ENCODE measurements at regions of chr22 and their contacts with region 1.

Region 1: DNA sequence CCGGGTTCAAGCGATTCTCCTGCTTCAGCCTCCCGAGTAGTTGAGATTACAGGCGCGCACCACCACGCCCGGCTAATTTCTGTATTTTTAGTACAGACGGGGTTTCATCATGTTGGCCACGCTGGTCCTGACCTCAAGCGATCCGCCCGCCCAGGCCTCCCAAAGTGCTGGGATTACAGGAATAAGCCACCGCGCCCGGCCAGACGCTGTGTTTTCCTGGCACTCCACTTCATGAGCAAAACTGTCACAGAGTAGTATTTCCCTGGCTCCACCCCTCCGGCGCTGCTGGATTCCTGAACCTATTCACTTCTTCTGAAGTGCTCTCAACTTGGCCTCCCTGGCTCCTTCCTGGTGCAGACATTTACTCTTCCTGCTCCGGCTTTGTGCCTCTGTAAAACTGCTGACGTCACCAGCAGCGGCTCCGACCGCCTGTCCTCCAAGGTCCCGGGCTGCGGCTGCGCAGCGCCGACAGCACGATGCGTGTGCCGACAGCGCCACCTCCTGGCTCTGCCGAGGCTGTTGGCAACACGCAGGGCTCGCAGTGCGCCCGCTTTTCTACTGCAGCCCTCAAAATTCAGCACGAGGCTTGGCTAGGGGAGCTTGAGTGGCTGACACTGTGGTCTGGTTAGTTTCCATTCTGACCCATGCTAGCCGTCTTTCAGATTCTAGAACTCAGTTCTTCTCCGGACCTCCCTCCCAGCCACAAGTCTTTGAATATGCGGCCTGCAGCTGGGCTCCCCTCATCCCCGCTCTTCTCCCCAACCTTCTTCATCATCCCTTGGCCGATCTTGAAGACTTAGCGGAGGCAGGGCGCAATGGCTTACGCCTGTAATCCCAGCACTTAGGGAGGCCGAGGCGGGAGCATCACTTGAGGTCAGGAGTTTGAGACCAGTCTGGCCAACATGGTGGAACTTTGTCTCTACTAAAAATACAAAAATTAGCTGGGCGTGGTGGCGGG is 36.6 kb downstream of the APOL3 start:
- DNase-seq: peak; percentile 80 to 97 (median 94)
- ATAC-seq: peak; percentile 99
- H3K4me3 ChIP-seq: peak overlapping the region; percentile 49 to 54
- H3K4me3 Mint-ChIP-seq: peak overlapping the region; percentile 89
- H3K27ac ChIP-seq: peak overlapping the region; percentile 41 to 71
- H3K27ac Mint-ChIP-seq: peak overlapping the region; percentile 98
- H3K4me1 ChIP-seq: peaks cover 9% of the 10 kb centered on the region
- H3K4me1 Mint-ChIP-seq: peaks cover 13% of the 10 kb centered on the region
- H3K27me3 ChIP-seq: no peaks in the 10 kb centered on the region
- H3K27me3 Mint-ChIP-seq: no peaks in the 10 kb centered on the region
- CTCF ChIP-seq: peak; percentile 95

Region 2: GRCh38 chr22:35430897-35431322 is 693.0 kb before region 1 on chr22:
- CTCF ChIA-PET with region 1: interaction called, 4 read pairs
- POLR2A ChIA-PET with region 1: no interaction called
- intact Hi-C with region 1: loop called (anchors 1 to 5 kb)
- DNase-seq: peak; percentile 49 to 76 (median 66)
- ATAC-seq: peak; percentile 84
- H3K4me3 ChIP-seq: no peak overlapping the region
- H3K4me3 Mint-ChIP-seq: no peak overlapping the region
- H3K27ac ChIP-seq: no peak overlapping the region
- H3K27ac Mint-ChIP-seq: no peak overlapping the region
- H3K4me1 ChIP-seq: no peaks in the 10 kb centered on the region
- H3K4me1 Mint-ChIP-seq: peaks cover 2% of the 10 kb centered on the region
- H3K27me3 ChIP-seq: no peaks in the 10 kb centered on the region
- H3K27me3 Mint-ChIP-seq: no peaks in the 10 kb centered on the region
- CTCF ChIP-seq: peak; percentile 83

Region 3: DNA sequence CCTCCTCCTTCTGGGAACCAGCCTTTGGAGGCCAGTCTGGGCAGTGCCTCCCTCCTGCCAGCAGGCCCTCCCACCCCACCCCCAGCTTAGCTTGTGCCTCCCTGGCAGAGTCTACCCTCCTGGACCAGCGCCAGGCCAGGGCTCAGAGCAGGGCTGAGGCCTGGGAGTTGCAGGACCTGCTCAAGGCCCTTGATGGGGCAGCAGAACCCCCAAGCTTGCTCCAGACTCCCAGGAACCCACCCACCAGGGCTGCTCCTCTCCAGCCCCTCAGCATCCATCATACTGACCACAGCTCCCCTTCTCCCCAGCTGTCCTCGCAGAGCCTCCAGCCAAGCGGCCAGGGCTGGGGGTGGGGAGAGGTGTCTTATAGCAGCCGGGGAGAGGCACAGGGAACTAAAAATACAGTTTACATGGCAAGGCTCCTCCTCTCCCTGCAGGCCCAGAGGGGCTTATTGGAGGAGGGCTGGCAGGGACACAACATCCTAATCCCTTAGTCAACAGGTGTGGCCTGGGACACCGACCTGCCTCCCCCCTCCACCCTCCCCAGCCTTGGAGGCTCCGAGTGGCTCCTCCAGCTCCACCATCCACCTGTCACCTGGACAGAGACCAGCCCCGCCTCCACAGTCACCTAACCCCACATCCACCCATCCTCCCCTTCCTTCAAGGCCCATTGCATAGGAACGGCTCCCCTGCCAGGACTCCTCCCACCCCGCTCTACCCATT is 501.6 kb before region 1 on chr22:
- CTCF ChIA-PET with region 1: interaction called, 9 read pairs
- POLR2A ChIA-PET with region 1: no interaction called
- intact Hi-C with region 1: loop called (anchors 1 to 2 kb)
- DNase-seq: no peak
- ATAC-seq: no peak
- H3K4me3 ChIP-seq: no peak overlapping the region
- H3K4me3 Mint-ChIP-seq: no peak overlapping the region
- H3K27ac ChIP-seq: no peak overlapping the region
- H3K27ac Mint-ChIP-seq: no peak overlapping the region
- H3K4me1 ChIP-seq: peaks cover 2% of the 10 kb centered on the region
- H3K4me1 Mint-ChIP-seq: peaks cover 9% of the 10 kb centered on the region
- H3K27me3 ChIP-seq: no peaks in the 10 kb centered on the region
- H3K27me3 Mint-ChIP-seq: peaks cover 7% of the 10 kb centered on the region
- CTCF ChIP-seq: no peak

Region 4: DNA sequence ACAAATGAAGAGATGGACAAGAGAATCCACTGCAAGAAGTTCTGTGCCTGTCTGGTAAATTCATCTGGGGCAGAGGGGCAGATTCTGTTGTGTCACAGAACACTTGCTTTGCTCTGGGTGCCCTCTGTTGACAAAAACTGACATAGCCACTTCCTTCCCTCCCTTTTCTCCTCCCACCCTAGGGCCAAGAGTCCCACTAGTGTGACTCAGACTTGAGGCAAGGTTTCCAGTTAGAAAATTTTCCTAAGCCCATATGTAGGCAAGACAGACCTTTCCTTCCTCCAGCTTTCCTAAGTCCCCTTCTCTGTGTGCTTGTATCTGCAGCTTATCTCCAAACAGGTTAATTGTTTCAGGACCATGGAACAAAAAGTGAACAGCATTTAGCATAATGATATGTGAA is 202.2 kb before region 1 on chr22:
- CTCF ChIA-PET with region 1: interaction called, 3 read pairs
- POLR2A ChIA-PET with region 1: no interaction called
- intact Hi-C with region 1: loop called in 1 of 2 experiments (anchors 5 kb)
- DNase-seq: peak in 7 of 9 experiments; percentile 7 to 58 (median 24)
- ATAC-seq: peak; percentile 48
- H3K4me3 ChIP-seq: no peak overlapping the region
- H3K4me3 Mint-ChIP-seq: no peak overlapping the region
- H3K27ac ChIP-seq: no peak overlapping the region
- H3K27ac Mint-ChIP-seq: no peak overlapping the region
- H3K4me1 ChIP-seq: no peaks in the 10 kb centered on the region
- H3K4me1 Mint-ChIP-seq: no peaks in the 10 kb centered on the region
- H3K27me3 ChIP-seq: no peaks in the 10 kb centered on the region
- H3K27me3 Mint-ChIP-seq: peaks cover 2% of the 10 kb centered on the region
- CTCF ChIP-seq: peak; percentile 43

Region 5: GRCh38 chr22:36065775-36066559 is 58.0 kb before region 1 on chr22:
- CTCF ChIA-PET with region 1: interaction called, 24 read pairs
- POLR2A ChIA-PET with region 1: no interaction called
- intact Hi-C with region 1: loop called (anchors 1 kb)
- DNase-seq: peak; percentile 34 to 80 (median 64)
- ATAC-seq: peak; percentile 81
- H3K4me3 ChIP-seq: peak overlapping the region; percentile 58 to 62
- H3K4me3 Mint-ChIP-seq: peak overlapping the region; percentile 81
- H3K27ac ChIP-seq: no peak overlapping the region
- H3K27ac Mint-ChIP-seq: no peak overlapping the region
- H3K4me1 ChIP-seq: peaks cover 9% of the 10 kb centered on the region
- H3K4me1 Mint-ChIP-seq: peaks cover 9% of the 10 kb centered on the region
- H3K27me3 ChIP-seq: no peaks in the 10 kb centered on the region
- H3K27me3 Mint-ChIP-seq: no peaks in the 10 kb centered on the region
- CTCF ChIP-seq: peak; percentile 99

Region 6: GRCh38 chr22:36180038-36180880 is 56.3 kb after region 1 on chr22:
- CTCF ChIA-PET with region 1: interaction called, 26 read pairs
- POLR2A ChIA-PET with region 1: interaction called, 4 read pairs
- intact Hi-C with region 1: no loop called
- DNase-seq: peak; percentile 75 to 94 (median 87)
- ATAC-seq: peak; percentile 99
- H3K4me3 ChIP-seq: no peak overlapping the region
- H3K4me3 Mint-ChIP-seq: no peak overlapping the region
- H3K27ac ChIP-seq: no peak overlapping the region
- H3K27ac Mint-ChIP-seq: no peak overlapping the region
- H3K4me1 ChIP-seq: peaks cover 4% of the 10 kb centered on the region
- H3K4me1 Mint-ChIP-seq: peaks cover 4% of the 10 kb centered on the region
- H3K27me3 ChIP-seq: no peaks in the 10 kb centered on the region
- H3K27me3 Mint-ChIP-seq: no peaks in the 10 kb centered on the region
- CTCF ChIP-seq: peak; percentile 84

Region 7: DNA sequence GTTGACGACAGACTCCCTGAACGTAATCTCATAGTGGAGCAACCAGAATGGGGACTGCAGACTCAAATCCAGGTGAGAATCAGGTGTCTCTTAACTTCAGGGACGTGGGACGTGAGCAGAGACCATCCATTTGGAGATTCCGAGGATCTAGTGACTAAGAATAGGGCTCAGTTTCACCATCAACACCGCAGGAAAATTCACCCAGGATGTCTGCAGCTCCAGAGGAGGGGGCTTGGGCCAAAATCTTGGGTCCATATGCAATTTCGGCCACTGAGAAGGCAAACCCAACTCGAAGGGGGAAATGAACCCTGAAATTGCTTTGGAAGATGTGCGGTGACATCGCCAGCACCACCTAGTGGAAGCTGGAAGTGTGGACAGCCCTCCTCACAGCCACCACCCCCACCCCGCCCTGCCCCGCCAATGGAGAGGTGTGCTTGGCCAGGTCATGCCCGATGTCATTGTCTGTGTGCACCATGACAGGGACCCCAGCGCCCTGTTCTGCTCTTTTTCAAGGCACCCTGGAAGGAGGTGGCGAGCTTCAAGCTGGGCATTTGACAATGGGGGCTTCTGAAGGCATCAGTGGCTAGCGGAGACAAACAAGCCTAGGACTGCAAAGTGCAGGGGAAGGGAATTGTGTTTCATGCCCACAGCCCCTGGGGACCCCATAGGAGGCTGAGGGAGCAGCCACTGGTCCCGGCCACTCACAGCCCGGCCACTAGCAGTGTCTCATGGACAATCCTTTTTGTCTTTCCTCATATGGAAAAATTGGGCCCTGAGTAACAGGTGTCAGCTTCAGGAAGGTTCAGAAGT is 153.7 kb after region 1 on chr22:
- CTCF ChIA-PET with region 1: no interaction called
- POLR2A ChIA-PET with region 1: no interaction called
- intact Hi-C with region 1: no loop called
- DNase-seq: peak; percentile 44 to 84 (median 64)
- ATAC-seq: peak; percentile 85
- H3K4me3 ChIP-seq: no peak overlapping the region
- H3K4me3 Mint-ChIP-seq: peak overlapping the region; percentile 11
- H3K27ac ChIP-seq: peak overlapping the region in 1 of 2 experiments; percentile 30
- H3K27ac Mint-ChIP-seq: peak overlapping the region; percentile 50
- H3K4me1 ChIP-seq: peaks cover 21% of the 10 kb centered on the region
- H3K4me1 Mint-ChIP-seq: peaks cover 18% of the 10 kb centered on the region
- H3K27me3 ChIP-seq: no peaks in the 10 kb centered on the region
- H3K27me3 Mint-ChIP-seq: no peaks in the 10 kb centered on the region
- CTCF ChIP-seq: peak; percentile 73